ENCODE measurements at regions of chr13 and their contacts with region 1.

Region 1: GRCh38 chr13:25306671-25307464 is 5.4 kb downstream of the NUP58 start:
- DNase-seq: no peak
- H3K4me3 Mint-ChIP-seq: no peak overlapping the region
- H3K27ac Mint-ChIP-seq: peak overlapping the region; percentile 29
- H3K4me1 Mint-ChIP-seq: peaks cover 39% of the 10 kb centered on the region
- H3K27me3 Mint-ChIP-seq: no peaks in the 10 kb centered on the region

Region 2: GRCh38 chr13:25319771-25320170 is 12.9 kb after region 1 on chr13:
- intact Hi-C with region 1: loop called (anchors 2 kb)
- DNase-seq: no peak
- H3K4me3 Mint-ChIP-seq: no peak overlapping the region
- H3K27ac Mint-ChIP-seq: no peak overlapping the region
- H3K4me1 Mint-ChIP-seq: peaks cover 19% of the 10 kb centered on the region
- H3K27me3 Mint-ChIP-seq: no peaks in the 10 kb centered on the region

Region 3: DNA sequence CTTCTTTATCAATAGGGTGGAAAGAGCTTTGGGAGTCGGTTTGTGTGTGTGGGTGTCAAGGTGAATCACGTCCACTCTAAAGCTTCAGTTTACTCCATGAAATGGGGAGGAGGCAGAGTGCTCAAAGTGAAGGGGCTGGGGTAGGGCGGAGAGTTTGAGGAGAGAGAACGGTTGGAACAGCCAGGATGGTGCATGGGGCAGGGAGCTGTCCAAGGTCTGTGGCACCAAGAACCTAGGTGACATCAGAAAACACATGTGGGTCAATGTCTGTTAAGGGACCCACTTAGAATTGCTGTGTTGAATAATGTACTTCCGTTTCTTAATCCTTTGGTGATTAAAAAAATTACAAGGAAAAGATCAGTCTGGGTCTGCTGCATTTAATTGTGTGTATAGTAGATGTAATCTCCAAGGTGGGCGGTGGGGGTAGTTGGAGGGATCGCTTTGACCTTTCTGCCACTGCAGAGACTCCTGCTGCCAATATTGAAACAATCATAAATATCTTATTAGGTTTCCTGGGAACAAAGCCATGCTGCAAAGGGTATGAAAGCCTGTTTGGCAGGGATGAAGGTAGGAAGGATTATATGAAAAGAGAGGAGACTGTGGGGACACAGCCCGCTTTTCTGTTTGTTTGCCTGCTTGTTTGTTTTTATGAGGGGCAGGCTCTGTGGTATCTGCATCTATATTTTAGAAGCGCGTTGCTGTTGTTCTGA is 187.2 kb after region 1 on chr13:
- intact Hi-C with region 1: no loop called
- DNase-seq: no peak
- H3K4me3 Mint-ChIP-seq: no peak overlapping the region
- H3K27ac Mint-ChIP-seq: no peak overlapping the region
- H3K4me1 Mint-ChIP-seq: no peaks in the 10 kb centered on the region
- H3K27me3 Mint-ChIP-seq: peaks cover 9% of the 10 kb centered on the region

Region 4: DNA sequence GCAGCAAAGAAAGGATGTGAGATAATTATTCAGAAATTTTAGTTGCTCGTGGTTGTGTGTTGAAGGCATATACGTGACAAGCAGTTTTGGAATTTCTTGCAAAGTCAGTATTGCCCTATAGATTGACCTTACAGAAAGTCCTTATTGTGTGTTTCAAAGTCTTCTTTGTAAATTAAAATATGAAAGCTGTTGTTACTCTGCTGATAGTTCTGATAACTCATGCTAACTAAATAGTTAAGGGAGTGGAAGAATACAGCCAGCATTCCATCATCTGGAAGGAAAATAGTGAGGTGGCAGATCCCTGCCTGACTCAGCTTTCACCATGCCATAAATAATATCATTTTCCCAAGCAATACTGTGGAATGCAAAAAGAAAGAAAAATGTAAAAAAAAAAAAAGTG is 1277.8 kb after region 1 on chr13:
- intact Hi-C with region 1: no loop called
- DNase-seq: no peak
- H3K4me3 Mint-ChIP-seq: no peak overlapping the region
- H3K27ac Mint-ChIP-seq: no peak overlapping the region
- H3K4me1 Mint-ChIP-seq: no peaks in the 10 kb centered on the region
- H3K27me3 Mint-ChIP-seq: peaks cover 12% of the 10 kb centered on the region

Region 5: GRCh38 chr13:26727633-26728032 is 1420.8 kb after region 1 on chr13:
- intact Hi-C with region 1: no loop called
- DNase-seq: no peak
- H3K4me3 Mint-ChIP-seq: no peak overlapping the region
- H3K27ac Mint-ChIP-seq: no peak overlapping the region
- H3K4me1 Mint-ChIP-seq: no peaks in the 10 kb centered on the region
- H3K27me3 Mint-ChIP-seq: no peaks in the 10 kb centered on the region